CD8-positive, alpha-beta T cell (primary cell): ENCODE measurements at regions of chr4 and their contacts with region 1.

Region 1: DNA sequence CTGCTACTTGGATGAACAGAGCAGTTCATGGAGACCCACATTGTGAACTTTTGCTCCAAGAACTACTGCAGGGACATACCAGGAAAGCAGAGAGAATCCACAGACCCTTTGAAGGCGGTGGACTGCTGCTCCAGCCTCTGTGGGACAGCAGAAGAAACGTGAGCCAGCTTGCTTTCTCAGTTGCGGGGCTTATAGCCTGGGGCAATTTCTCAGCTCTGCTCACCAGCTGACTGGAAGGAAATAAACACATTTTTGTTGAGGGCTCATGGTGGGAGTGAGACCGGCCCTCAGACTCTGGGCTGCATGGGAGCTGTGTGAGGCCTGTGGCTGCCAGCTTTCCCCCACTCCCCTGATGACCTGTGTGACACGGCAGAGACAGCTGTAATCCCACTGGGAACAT is 2.6 kb upstream of the ADH1A start:
- DNase-seq: no peak
- ATAC-seq: no peak
- H3K4me3 ChIP-seq: no peak overlapping the region
- H3K4me3 Mint-ChIP-seq: no peak overlapping the region
- H3K27ac ChIP-seq: no peak overlapping the region
- H3K27ac Mint-ChIP-seq: no peak overlapping the region
- H3K4me1 ChIP-seq: no peaks in the 10 kb centered on the region
- H3K4me1 Mint-ChIP-seq: no peaks in the 10 kb centered on the region
- H3K27me3 ChIP-seq: peaks cover 0 to 2% of the 10 kb centered on the region in 2 experiments
- H3K27me3 Mint-ChIP-seq: peaks cover 11% of the 10 kb centered on the region
- CTCF ChIP-seq: no peak

Region 2: DNA sequence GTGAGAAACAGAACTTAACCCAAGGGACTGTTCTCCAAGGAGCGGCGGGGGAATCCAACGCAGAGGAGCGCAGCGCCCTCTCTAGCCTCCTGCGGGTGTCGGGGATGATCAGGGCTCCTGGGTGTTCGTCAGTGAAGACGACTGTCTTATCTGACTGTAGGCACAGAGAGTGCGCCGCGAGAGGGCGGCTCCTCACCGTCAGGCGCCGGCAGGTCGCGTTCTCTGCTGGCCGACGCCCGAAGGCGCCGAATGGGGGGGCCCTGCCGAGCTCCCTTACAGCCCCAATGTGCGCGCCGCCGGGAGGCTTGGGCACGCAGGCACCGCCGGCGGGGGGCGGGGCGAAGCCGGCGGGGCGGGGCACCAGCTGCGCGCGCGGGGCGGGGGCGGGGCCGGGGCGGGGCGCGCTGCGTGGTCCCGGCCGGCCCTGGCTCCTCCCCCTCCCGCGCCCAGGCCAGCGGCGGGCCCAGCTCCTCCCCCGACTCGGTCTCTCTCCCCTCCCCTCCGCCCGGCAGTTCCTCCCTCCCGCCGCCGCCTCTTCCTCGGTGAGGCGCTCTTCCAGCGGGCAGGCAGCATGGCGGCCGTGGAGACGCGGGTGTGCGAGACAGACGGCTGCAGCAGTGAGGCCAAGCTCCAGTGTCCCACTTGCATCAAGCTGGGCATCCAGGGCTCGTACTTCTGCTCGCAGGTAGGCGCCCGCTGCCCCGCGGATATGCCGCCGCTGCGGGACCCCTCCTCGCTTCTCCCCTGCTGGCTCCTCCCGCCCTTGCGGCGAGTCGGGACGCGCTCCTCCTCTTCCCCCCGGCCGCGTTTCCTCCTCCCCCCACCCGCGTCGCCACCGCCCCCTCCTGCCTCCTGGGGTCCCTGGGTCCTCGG is 297.9 kb before region 1 on chr4 and contains the start of gene METAP1:
- CTCF ChIA-PET with region 1: no interaction called
- POLR2A ChIA-PET with region 1: no interaction called
- intact Hi-C with region 1: no loop called
- DNase-seq: peak; percentile 91 to 99 (median 96)
- ATAC-seq: peak; percentile 83
- H3K4me3 ChIP-seq: peak within 1 kb of the TSS; percentile 79 to 87
- H3K4me3 Mint-ChIP-seq: peak within 1 kb of the TSS; percentile 89
- H3K27ac ChIP-seq: peak within 1 kb of the TSS; percentile 77 to 83
- H3K27ac Mint-ChIP-seq: peak within 1 kb of the TSS; percentile 98
- H3K4me1 ChIP-seq: peaks cover 21% of the 10 kb centered on the region
- H3K4me1 Mint-ChIP-seq: peaks cover 39% of the 10 kb centered on the region
- H3K27me3 ChIP-seq: no peaks in the 10 kb centered on the region
- H3K27me3 Mint-ChIP-seq: no peaks in the 10 kb centered on the region
- CTCF ChIP-seq: peak; percentile 66
- total RNA-seq, gene METAP1: 21.0 to 23.2 TPM

Region 3: DNA sequence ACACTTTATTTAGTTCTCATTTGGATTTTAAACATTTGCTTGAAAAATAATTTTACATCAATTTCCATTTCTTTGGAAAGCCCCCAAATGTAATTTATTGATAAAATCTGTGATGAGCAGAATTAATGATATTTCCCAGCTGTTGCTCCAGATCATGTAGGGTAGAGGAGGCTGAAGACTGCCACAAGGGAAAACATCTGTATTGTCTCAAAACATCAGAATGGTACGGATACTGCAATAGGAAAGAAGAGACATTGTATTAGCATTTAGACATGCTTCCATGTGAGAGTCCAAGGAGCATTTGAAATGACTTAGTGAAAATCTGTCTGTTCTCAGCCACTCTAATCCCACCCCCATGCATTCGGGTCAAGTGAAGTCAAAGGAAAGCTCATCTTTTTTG is 16.9 kb before region 1 on chr4:
- CTCF ChIA-PET with region 1: no interaction called
- POLR2A ChIA-PET with region 1: interaction called, 3 read pairs
- intact Hi-C with region 1: loop called in 1 of 2 experiments (anchors 1 kb)
- DNase-seq: no peak
- ATAC-seq: no peak
- H3K4me3 ChIP-seq: no peak overlapping the region
- H3K4me3 Mint-ChIP-seq: no peak overlapping the region
- H3K27ac ChIP-seq: no peak overlapping the region
- H3K27ac Mint-ChIP-seq: no peak overlapping the region
- H3K4me1 ChIP-seq: no peaks in the 10 kb centered on the region
- H3K4me1 Mint-ChIP-seq: no peaks in the 10 kb centered on the region
- H3K27me3 ChIP-seq: no peaks in the 10 kb centered on the region
- H3K27me3 Mint-ChIP-seq: no peaks in the 10 kb centered on the region
- CTCF ChIP-seq: no peak